Naive thymus-derived CD4-positive, alpha-beta T cell (primary cell): ENCODE measurements at regions of chr19 and their contacts with region 1.

Region 1: GRCh38 chr19:3429581-3430080 is 50.7 kb downstream of the SMIM24 start:
- DNase-seq: peak; percentile 60 to 88 (median 74)
- ATAC-seq: peak; percentile 92
- H3K4me3 ChIP-seq: no peak overlapping the region
- H3K4me3 Mint-ChIP-seq: no peak overlapping the region
- H3K27ac ChIP-seq: no peak overlapping the region
- H3K27ac Mint-ChIP-seq: no peak overlapping the region
- H3K4me1 ChIP-seq: peaks cover 4% of the 10 kb centered on the region in 2 donors
- H3K4me1 Mint-ChIP-seq: peaks cover 4 to 11% (median 6%) of the 10 kb centered on the region in 7 donors
- H3K27me3 ChIP-seq: no peaks in the 10 kb centered on the region
- H3K27me3 Mint-ChIP-seq: no peaks in the 10 kb centered on the region

Region 2: DNA sequence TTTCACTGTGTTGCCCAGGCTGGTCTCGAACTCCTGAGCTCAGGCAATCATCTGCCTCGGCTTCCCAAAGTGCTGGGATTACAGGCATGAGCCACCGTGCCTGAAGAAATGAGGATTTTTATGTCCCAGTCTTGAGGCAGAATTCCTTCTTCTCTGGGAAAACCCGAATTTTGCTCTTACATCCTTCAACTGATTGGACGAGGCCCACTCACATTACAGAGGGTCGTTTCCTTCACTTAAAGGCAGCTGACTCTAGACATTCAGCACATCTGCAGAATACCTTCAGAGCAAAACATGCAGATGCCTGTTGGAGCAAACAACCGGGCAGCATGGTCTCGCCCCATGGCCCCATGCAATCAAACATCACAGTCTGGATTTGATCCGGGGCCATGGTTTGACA is 99.6 kb before region 1 on chr19:
- CTCF ChIA-PET with region 1: interaction called, 24 read pairs
- POLR2A ChIA-PET with region 1: interaction called, 6 read pairs
- intact Hi-C with region 1: loop called (anchors 1 kb)
- DNase-seq: no peak
- ATAC-seq: no peak
- H3K4me3 ChIP-seq: no peak overlapping the region
- H3K4me3 Mint-ChIP-seq: no peak overlapping the region
- H3K27ac ChIP-seq: no peak overlapping the region
- H3K27ac Mint-ChIP-seq: no peak overlapping the region
- H3K4me1 ChIP-seq: no peaks in the 10 kb centered on the region
- H3K4me1 Mint-ChIP-seq: peaks cover 0 to 4% (median 0%) of the 10 kb centered on the region in 7 donors
- H3K27me3 ChIP-seq: no peaks in the 10 kb centered on the region
- H3K27me3 Mint-ChIP-seq: peaks cover 0 to 2% (median 0%) of the 10 kb centered on the region in 5 donors

Region 3: GRCh38 chr19:3375221-3376090 is 54.2 kb before region 1 on chr19:
- CTCF ChIA-PET with region 1: interaction called, 11 read pairs
- POLR2A ChIA-PET with region 1: no interaction called
- intact Hi-C with region 1: no loop called
- DNase-seq: no peak
- ATAC-seq: no peak
- H3K4me3 ChIP-seq: no peak overlapping the region
- H3K4me3 Mint-ChIP-seq: no peak overlapping the region
- H3K27ac ChIP-seq: no peak overlapping the region
- H3K27ac Mint-ChIP-seq: no peak overlapping the region
- H3K4me1 ChIP-seq: no peaks in the 10 kb centered on the region
- H3K4me1 Mint-ChIP-seq: peaks cover 0 to 14% (median 11%) of the 10 kb centered on the region in 7 donors
- H3K27me3 ChIP-seq: no peaks in the 10 kb centered on the region
- H3K27me3 Mint-ChIP-seq: no peaks in the 10 kb centered on the region

Region 4: DNA sequence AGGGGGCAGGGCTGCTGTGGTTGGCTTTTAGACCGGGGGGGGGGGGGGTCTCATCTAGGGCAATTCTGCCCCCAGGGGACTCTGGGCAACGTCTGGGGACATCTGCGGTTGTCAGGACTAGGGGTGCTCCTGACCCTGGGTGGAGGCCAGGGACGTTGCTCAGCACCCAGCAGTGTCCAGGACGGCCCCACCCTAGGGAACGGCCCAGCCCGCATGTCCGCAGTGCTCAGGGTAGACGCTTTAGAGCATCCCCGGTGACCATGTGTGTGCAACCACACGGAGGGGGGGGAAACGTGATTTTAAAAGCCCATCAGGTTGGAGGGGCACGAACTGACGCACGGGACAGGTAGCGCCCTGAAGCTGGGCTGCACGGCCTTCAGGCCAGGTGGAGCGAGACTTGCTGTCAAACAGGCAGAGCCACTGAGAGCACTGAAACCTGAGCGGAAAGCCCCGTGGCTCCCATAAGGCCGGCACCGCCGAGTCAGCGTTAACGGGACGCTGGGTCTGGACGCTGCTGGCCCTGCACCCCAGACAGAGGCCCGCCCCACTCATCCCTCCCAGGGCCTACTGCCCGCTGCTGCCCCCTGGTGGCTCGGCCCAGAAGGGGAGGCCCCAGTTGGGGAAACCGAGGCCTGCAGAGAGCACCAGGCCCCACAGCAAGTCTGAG is 188.6 kb after region 1 on chr19:
- CTCF ChIA-PET with region 1: no interaction called
- POLR2A ChIA-PET with region 1: no interaction called
- intact Hi-C with region 1: no loop called
- DNase-seq: peak in 7 of 9 donors; percentile 38 to 71 (median 45)
- ATAC-seq: peak; percentile 82
- H3K4me3 ChIP-seq: no peak overlapping the region
- H3K4me3 Mint-ChIP-seq: peak overlapping the region in 1 of 10 donors; percentile 76
- H3K27ac ChIP-seq: no peak overlapping the region
- H3K27ac Mint-ChIP-seq: no peak overlapping the region
- H3K4me1 ChIP-seq: peaks cover 0 to 13% of the 10 kb centered on the region in 2 donors
- H3K4me1 Mint-ChIP-seq: peaks cover 0 to 22% (median 15%) of the 10 kb centered on the region in 7 donors
- H3K27me3 ChIP-seq: no peaks in the 10 kb centered on the region
- H3K27me3 Mint-ChIP-seq: no peaks in the 10 kb centered on the region